Activated naive CD4-positive, alpha-beta T cell treated with anti-CD3 and anti-CD28 coated beads for 36 hours (primary cell): ENCODE measurements at regions of chr17 and their contacts with region 1.

Region 1: DNA sequence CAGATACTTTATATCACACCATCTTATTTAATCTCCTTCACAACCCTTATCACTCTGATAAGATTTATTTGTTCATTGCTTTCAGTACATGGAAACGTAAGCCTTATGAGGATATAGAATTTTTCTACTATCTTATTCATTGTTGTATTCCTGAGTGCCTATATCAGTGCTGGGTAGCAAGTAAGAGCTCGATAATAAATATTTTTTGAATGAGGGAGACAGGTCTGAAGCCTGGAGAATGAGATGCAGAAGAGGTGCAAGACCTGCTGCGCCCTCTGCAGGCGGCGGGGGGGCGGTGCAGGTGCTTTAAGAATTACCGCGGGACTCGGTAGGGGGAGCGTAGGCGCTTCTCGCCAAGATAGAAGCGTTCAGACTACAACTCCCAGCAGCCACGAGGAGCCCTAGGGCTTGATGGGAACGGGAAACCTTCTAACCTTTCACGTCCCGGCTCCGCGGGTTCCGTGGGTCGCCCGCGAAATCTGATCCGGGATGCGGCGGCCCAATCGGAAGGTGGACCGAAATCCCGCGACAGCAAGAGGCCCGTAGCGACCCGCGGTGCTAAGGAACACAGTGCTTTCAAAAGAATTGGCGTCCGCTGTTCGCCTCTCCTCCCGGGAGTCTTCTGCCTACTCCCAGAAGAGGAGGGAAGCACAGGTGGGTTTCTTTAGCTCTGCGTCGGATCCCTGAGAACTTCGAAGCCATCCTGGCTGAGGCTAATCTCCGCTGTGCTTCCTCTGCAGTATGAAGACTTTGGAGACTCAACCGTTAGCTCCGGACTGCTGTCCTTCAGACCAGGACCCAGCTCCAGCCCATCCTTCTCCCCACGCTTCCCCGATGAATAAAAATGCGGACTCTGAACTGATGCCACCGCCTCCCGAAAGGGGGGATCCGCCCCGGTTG is at the start of gene WRAP53:
- DNase-seq: peak; percentile 98
- H3K4me3 Mint-ChIP-seq: peak within 1 kb of the TSS; percentile 89
- H3K27ac Mint-ChIP-seq: peak within 1 kb of the TSS; percentile 99
- H3K4me1 Mint-ChIP-seq: peaks cover 33% of the 10 kb centered on the region
- H3K27me3 Mint-ChIP-seq: no peaks in the 10 kb centered on the region
- total RNA-seq, gene WRAP53: 13.7 to 14.7 TPM

Region 2: GRCh38 chr17:7306911-7307686 is 381.1 kb before region 1 on chr17 and contains the start of gene EIF5A:
- CTCF ChIA-PET with region 1: no interaction called
- intact Hi-C with region 1: loop called (anchors 1 kb)
- DNase-seq: peak; percentile 100
- H3K4me3 Mint-ChIP-seq: peak within 1 kb of the TSS; percentile 86
- H3K27ac Mint-ChIP-seq: peak within 1 kb of the TSS; percentile 96
- H3K4me1 Mint-ChIP-seq: peaks cover 35% of the 10 kb centered on the region
- H3K27me3 Mint-ChIP-seq: no peaks in the 10 kb centered on the region
- total RNA-seq, gene EIF5A: 757 to 792 TPM

Region 3: GRCh38 chr17:7435221-7435675 is 252.9 kb before region 1 on chr17 and contains the start of gene TMEM102:
- CTCF ChIA-PET with region 1: interaction called, 3 read pairs
- intact Hi-C with region 1: loop called (anchors 1 kb)
- DNase-seq: peak; percentile 99
- H3K4me3 Mint-ChIP-seq: peak within 1 kb of the TSS; percentile 92
- H3K27ac Mint-ChIP-seq: peak within 1 kb of the TSS; percentile 91
- H3K4me1 Mint-ChIP-seq: peaks cover 36% of the 10 kb centered on the region
- H3K27me3 Mint-ChIP-seq: peaks cover 12% of the 10 kb centered on the region
- total RNA-seq, gene TMEM102: 3.3 to 3.5 TPM

Region 4: GRCh38 chr17:7572588-7573323 is 115.4 kb before region 1 on chr17:
- CTCF ChIA-PET with region 1: interaction called, 3 read pairs
- intact Hi-C with region 1: loop called (anchors 1 kb)
- DNase-seq: peak; percentile 100
- H3K4me3 Mint-ChIP-seq: peak overlapping the region; percentile 85
- H3K27ac Mint-ChIP-seq: peak overlapping the region; percentile 99
- H3K4me1 Mint-ChIP-seq: peaks cover 55% of the 10 kb centered on the region
- H3K27me3 Mint-ChIP-seq: no peaks in the 10 kb centered on the region

Region 5: DNA sequence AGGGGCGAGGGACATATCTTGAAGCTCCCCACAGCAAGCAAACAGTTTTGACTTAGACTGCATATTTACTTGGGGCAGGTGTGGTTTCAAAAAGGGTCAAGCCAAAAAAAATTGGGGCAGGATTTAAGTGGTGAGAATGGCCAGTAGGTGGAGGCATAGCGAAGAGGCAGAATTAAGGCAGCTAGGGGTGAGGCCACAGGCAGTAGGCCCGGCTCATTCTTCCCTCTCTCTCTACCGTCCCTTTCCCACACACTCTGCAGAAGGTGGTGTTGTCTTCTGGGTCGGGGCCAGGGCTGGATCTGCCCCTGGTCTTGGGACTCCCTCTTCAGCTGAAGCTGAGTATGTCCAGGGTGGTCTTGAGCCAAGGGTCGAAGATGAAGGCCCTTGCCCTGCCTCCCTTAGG is 55.7 kb before region 1 on chr17:
- CTCF ChIA-PET with region 1: interaction called, 56 read pairs
- intact Hi-C with region 1: loop called (anchors 1 kb)
- DNase-seq: peak; percentile 60
- H3K4me3 Mint-ChIP-seq: no peak overlapping the region
- H3K27ac Mint-ChIP-seq: no peak overlapping the region
- H3K4me1 Mint-ChIP-seq: peaks cover 2% of the 10 kb centered on the region
- H3K27me3 Mint-ChIP-seq: no peaks in the 10 kb centered on the region

Region 6: GRCh38 chr17:7887482-7888183 is 199.5 kb after region 1 on chr17:
- CTCF ChIA-PET with region 1: no interaction called
- intact Hi-C with region 1: loop called (anchors 1 kb)
- DNase-seq: peak; percentile 96
- H3K4me3 Mint-ChIP-seq: no peak overlapping the region
- H3K27ac Mint-ChIP-seq: no peak overlapping the region
- H3K4me1 Mint-ChIP-seq: peaks cover 5% of the 10 kb centered on the region
- H3K27me3 Mint-ChIP-seq: no peaks in the 10 kb centered on the region